ENCODE measurements at regions of chr7 and their contacts with region 1.

Region 1: GRCh38 chr7:30916767-30917166 is 5.1 kb downstream of the AQP1 start:
- DNase-seq: no peak
- ATAC-seq: no peak
- H3K4me3 ChIP-seq: no peak overlapping the region
- H3K27ac ChIP-seq: no peak overlapping the region
- H3K4me1 ChIP-seq: peaks cover 40% of the 10 kb centered on the region
- H3K27me3 ChIP-seq: no peaks in the 10 kb centered on the region
- CTCF ChIP-seq: no peak

Region 2: GRCh38 chr7:30572212-30572841 is 344.4 kb before region 1 on chr7:
- CTCF ChIA-PET with region 1: no interaction called
- POLR2A ChIA-PET with region 1: no interaction called
- intact Hi-C with region 1: no loop called
- DNase-seq: peak; percentile 4
- ATAC-seq: no peak
- H3K4me3 ChIP-seq: no peak overlapping the region
- H3K27ac ChIP-seq: no peak overlapping the region
- H3K4me1 ChIP-seq: no peaks in the 10 kb centered on the region
- H3K27me3 ChIP-seq: no peaks in the 10 kb centered on the region
- CTCF ChIP-seq: no peak

Region 3: GRCh38 chr7:30888747-30889146 is 28.0 kb before region 1 on chr7:
- CTCF ChIA-PET with region 1: no interaction called
- POLR2A ChIA-PET with region 1: interaction called, 12 read pairs
- intact Hi-C with region 1: no loop called
- DNase-seq: peak; percentile 74
- ATAC-seq: peak; percentile 96
- H3K4me3 ChIP-seq: no peak overlapping the region
- H3K27ac ChIP-seq: no peak overlapping the region
- H3K4me1 ChIP-seq: peaks cover 9% of the 10 kb centered on the region; the same call in 1 of the 2 replicates
- H3K27me3 ChIP-seq: no peaks in the 10 kb centered on the region
- CTCF ChIP-seq: no peak

Region 4: GRCh38 chr7:32318300-32319011 is 1401.7 kb after region 1 on chr7:
- CTCF ChIA-PET with region 1: no interaction called
- POLR2A ChIA-PET with region 1: no interaction called
- intact Hi-C with region 1: no loop called
- DNase-seq: no peak
- ATAC-seq: no peak
- H3K4me3 ChIP-seq: no peak overlapping the region
- H3K27ac ChIP-seq: no peak overlapping the region
- H3K4me1 ChIP-seq: no peaks in the 10 kb centered on the region
- H3K27me3 ChIP-seq: peaks cover 89% of the 10 kb centered on the region
- CTCF ChIP-seq: no peak

Measured in PC-3 (cell line).